ENCODE measurements at regions of chr9 and their contacts with region 1.

Region 1: DNA sequence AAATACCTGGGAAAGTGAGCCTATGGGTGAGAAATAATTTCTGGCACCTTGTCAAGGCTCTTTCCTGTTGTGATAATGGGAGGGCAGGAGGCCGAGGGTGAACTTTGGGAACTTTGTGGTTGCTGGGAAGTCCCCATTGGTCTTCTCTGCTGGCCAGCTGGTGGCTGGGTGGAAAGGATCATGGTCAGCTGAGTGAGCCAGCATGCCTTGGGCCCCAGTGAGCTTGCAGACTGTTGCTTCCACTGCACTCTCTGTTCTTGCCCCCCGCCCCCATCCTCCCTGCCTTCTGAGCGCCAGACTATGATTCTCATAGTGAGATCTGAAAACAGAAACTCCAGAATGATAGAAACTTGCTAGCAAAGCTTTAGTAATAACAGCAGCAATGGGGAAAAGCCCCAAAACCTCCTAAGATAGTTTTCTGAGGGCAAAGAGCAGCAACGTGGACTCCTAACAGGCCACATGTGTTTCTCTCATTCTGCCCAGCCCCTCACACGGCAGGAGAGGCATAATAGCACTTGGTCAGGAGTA is 139.2 kb upstream of the SMARCA2 start:
- DNase-seq: peak; percentile 89
- H3K4me3 Mint-ChIP-seq: no peak overlapping the region
- H3K27ac Mint-ChIP-seq: peak overlapping the region; percentile 78
- H3K4me1 Mint-ChIP-seq: peaks cover 43% of the 10 kb centered on the region
- H3K27me3 Mint-ChIP-seq: peaks cover 10% of the 10 kb centered on the region

Region 2: DNA sequence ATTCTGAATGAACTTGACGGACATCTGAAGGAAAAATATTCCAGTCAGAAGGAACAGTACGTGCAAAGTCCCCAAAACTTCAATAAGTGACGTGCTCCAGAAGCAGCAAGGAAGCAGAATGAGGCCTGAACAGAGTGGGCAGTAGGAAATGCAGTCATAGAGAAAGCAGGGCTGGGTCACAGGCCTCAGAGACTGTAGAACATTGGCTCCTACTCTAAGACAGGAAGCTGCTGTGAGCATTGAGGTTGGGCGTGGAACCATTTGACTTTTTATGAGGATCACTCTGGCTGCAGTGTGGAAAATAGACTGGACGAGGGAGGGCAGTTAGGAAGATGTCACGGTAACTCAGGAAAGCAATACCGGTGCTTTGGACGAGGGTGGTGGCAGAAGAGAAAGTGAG is 1597.3 kb before region 1 on chr9:
- CTCF ChIA-PET with region 1: no interaction called
- intact Hi-C with region 1: loop called (anchors 5 kb)
- DNase-seq: peak; percentile 78
- H3K4me3 Mint-ChIP-seq: no peak overlapping the region
- H3K27ac Mint-ChIP-seq: no peak overlapping the region
- H3K4me1 Mint-ChIP-seq: peaks cover 42% of the 10 kb centered on the region
- H3K27me3 Mint-ChIP-seq: no peaks in the 10 kb centered on the region

Region 3: DNA sequence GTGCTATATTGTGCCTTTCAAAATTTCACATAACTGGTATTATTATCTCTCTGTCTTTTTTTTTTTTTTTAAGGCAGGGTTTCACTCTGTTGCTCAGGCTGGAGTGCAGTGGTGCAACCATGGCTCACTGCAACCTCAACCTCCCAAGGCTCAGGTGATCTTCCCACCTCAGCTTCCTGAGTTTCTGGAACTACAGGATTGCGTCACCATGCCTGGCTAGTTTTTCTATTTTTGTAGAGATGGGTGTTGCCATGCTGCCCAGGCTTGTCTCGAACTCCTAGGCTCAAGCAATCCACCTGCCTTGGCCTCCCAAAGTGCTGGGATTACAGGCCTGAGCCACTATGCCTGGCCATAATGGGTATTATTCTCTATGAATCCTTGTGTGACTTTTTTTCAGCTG is 263.1 kb before region 1 on chr9:
- CTCF ChIA-PET with region 1: no interaction called
- intact Hi-C with region 1: no loop called
- DNase-seq: no peak
- H3K4me3 Mint-ChIP-seq: no peak overlapping the region
- H3K27ac Mint-ChIP-seq: no peak overlapping the region
- H3K4me1 Mint-ChIP-seq: no peaks in the 10 kb centered on the region
- H3K27me3 Mint-ChIP-seq: peaks cover 14% of the 10 kb centered on the region

Region 4: DNA sequence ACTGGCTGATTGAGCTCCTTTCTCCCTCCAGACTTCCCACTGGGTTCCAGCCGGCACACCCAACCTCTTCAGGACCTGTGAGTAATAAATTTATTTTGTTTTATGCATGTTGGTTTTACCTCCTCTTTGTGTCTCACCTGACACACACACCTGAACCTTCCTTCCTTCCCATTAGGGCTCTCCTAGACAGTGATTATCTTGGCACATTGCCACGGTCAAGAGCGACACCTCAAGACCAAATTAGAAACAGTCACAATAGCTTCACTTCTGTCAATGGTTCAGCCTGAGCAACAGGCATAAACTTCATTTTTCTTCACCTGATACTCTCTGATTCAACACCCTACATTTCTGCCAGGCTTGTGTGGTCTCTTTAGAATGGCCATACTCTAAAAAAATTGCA is 157.1 kb before region 1 on chr9:
- CTCF ChIA-PET with region 1: no interaction called
- intact Hi-C with region 1: no loop called
- DNase-seq: no peak
- H3K4me3 Mint-ChIP-seq: no peak overlapping the region
- H3K27ac Mint-ChIP-seq: no peak overlapping the region
- H3K4me1 Mint-ChIP-seq: no peaks in the 10 kb centered on the region
- H3K27me3 Mint-ChIP-seq: peaks cover 22% of the 10 kb centered on the region

Region 5: GRCh38 chr9:1929722-1930621 is 54.0 kb after region 1 on chr9:
- CTCF ChIA-PET with region 1: interaction called, 4 read pairs
- intact Hi-C with region 1: loop called (anchors 5 kb)
- DNase-seq: peak; percentile 14
- H3K4me3 Mint-ChIP-seq: no peak overlapping the region
- H3K27ac Mint-ChIP-seq: no peak overlapping the region
- H3K4me1 Mint-ChIP-seq: peaks cover 9% of the 10 kb centered on the region
- H3K27me3 Mint-ChIP-seq: peaks cover 3% of the 10 kb centered on the region

Region 6: GRCh38 chr9:2014696-2015580 is 139.0 kb after region 1 on chr9 and contains the start of gene SMARCA2:
- CTCF ChIA-PET with region 1: interaction called, 4 read pairs
- intact Hi-C with region 1: loop called (anchors 1 kb)
- DNase-seq: peak; percentile 97
- H3K4me3 Mint-ChIP-seq: peak within 1 kb of the TSS; percentile 92
- H3K27ac Mint-ChIP-seq: peak within 1 kb of the TSS; percentile 99
- H3K4me1 Mint-ChIP-seq: peaks cover 44% of the 10 kb centered on the region
- H3K27me3 Mint-ChIP-seq: no peaks in the 10 kb centered on the region
- total RNA-seq, gene SMARCA2: 87.8 to 89.9 TPM

Region 7: DNA sequence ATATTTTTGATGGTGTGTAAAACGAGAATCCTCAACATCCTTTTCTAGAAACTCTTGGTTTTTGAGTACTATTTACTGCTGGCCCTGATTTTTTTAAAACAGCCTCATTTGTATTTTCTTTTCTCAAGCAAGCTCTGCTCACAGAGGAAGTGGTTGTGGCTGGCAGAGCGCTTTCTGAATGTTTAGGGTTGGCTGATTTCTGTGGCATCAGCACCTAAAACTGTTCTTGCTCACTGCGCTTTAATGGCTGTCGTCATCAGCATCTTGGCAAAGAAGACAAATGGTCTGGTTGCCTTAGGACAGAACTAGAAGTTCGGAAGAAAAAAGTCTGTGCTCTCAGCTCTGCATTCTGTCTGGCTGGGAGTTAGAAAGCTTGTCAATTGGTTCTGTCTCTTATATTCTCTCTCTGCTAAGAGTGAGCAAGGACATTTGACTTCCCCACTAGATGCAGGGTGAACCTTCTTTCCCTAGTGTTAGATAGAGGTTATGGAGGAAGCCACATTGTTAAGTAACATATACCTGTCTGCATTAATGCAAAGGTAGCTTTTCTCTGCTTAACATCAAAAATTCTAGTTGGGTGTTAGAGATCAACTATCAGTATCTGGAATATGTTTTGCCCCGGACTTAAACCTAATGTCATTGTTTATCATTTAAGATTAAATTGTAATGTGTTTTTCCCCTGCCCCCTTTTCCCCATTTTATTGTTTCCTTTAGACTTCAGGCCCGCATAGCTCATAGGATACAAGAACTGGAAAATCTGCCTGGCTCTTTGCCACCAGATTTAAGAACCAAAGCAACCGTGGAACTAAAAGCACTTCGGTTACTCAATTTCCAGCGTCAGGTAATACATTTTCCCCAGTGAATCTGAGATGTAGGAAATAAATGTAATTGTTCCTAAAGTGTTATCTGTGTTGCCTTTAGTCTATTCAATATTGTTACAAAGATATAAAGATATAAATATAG is 178.2 kb after region 1 on chr9:
- CTCF ChIA-PET with region 1: interaction called, 3 read pairs
- intact Hi-C with region 1: loop called (anchors 1 kb)
- DNase-seq: peak; percentile 89
- H3K4me3 Mint-ChIP-seq: peak overlapping the region; percentile 5
- H3K27ac Mint-ChIP-seq: peak overlapping the region; percentile 83
- H3K4me1 Mint-ChIP-seq: peaks cover 53% of the 10 kb centered on the region
- H3K27me3 Mint-ChIP-seq: no peaks in the 10 kb centered on the region

Region 8: DNA sequence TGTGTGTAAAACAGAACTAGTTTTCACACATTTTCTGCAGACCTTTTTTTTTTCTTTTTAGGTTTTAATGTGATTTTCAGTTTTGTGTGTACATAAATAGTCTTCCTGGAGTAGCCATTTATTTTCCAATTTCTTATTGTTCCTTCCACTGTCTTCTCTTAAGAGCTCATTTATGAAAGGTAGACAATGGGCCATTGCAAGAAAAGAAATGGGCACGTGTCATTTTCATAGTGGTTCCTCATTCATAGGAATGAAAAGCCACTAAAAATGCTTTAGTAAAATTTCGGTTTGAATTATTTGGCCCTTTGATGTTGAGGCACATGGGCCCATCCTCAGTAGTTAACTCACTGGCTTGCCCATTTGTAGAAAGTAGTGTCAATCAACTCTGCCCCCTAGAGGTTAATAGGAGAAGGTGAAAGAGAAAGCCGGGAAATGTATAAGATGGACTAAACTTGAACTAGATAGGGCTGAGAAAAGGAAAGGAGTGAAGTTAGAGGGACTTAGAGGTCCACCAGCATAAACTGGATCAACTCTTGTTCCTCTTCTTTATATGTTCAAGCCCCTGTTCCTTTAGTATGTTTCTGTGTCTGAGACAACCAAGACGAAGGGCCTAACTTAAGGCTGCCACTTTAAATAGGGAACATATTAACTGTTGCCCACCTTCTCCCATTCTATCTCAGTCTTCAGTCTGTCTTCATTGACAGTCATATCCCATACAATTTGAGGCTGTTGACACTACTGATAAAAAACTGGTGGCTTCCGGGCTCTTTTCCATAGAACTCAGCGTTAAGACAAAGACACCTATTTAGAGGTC is 211.7 kb after region 1 on chr9:
- CTCF ChIA-PET with region 1: no interaction called
- intact Hi-C with region 1: loop called (anchors 2 kb)
- DNase-seq: peak; percentile 26
- H3K4me3 Mint-ChIP-seq: no peak overlapping the region
- H3K27ac Mint-ChIP-seq: no peak overlapping the region
- H3K4me1 Mint-ChIP-seq: peaks cover 10% of the 10 kb centered on the region
- H3K27me3 Mint-ChIP-seq: no peaks in the 10 kb centered on the region

Region 9: GRCh38 chr9:2158111-2158610 is 282.2 kb after region 1 on chr9:
- CTCF ChIA-PET with region 1: no interaction called
- intact Hi-C with region 1: loop called (anchors 1 kb)
- DNase-seq: peak; percentile 66
- H3K4me3 Mint-ChIP-seq: peak overlapping the region; percentile 80
- H3K27ac Mint-ChIP-seq: peak overlapping the region; percentile 94
- H3K4me1 Mint-ChIP-seq: peaks cover 58% of the 10 kb centered on the region
- H3K27me3 Mint-ChIP-seq: no peaks in the 10 kb centered on the region